ENCODE measurements at regions of chr3 and their contacts with region 1.

Region 1: GRCh38 chr3:146747928-146748327 is 142.8 kb upstream of the PLSCR5 start:
- DNase-seq: peak; percentile 35
- H3K4me3 ChIP-seq: no peak overlapping the region
- H3K27ac ChIP-seq: peak overlapping the region; percentile 20
- H3K4me1 ChIP-seq: peaks cover 28% of the 10 kb centered on the region
- H3K27me3 ChIP-seq: no peaks in the 10 kb centered on the region
- CTCF ChIP-seq: peak in 1 of 2 donors; percentile 6
- POLR2A ChIP-seq: no peak

Region 2: GRCh38 chr3:146968204-146968651 is 220.3 kb after region 1 on chr3:
- CTCF ChIA-PET with region 1: no interaction called
- POLR2A ChIA-PET with region 1: no interaction called
- dilution Hi-C with region 1: no loop called
- intact Hi-C with region 1: loop called (anchors 5 kb)
- DNase-seq: peak; percentile 46
- H3K4me3 ChIP-seq: no peak overlapping the region
- H3K27ac ChIP-seq: no peak overlapping the region
- H3K4me1 ChIP-seq: peaks cover 12% of the 10 kb centered on the region
- H3K27me3 ChIP-seq: no peaks in the 10 kb centered on the region
- CTCF ChIP-seq: no peak
- POLR2A ChIP-seq: no peak

Region 3: DNA sequence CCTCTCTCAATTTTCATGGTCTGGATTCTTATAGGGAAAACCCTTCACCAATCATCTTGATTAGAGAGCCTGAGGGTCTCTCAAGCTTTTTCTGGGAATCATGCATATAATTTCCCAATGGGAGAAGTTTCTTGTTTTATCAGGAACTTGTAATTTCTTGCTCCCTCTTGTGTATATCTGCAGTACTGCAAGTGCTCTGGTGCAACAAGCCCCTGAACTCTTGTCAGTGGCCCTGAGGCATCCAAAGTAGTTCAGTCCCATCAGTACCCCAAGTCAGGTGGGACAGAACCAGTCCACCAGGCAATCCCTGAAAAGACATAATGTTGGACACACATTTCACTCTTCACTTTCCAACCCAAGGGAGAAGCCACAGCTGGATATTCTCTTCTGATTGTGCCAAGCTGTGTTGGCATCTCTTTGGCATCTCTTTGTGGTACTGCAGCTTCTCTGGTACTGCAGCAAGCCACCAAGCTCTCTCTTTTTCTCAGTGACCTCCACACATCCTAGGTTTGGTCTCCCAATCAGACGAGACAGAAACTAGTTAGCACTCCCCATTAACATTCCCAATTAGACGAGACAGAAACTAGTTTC is 444.0 kb after region 1 on chr3:
- CTCF ChIA-PET with region 1: interaction called, 37 read pairs
- POLR2A ChIA-PET with region 1: no interaction called
- dilution Hi-C with region 1: no loop called
- intact Hi-C with region 1: loop called (anchors 1 kb)
- DNase-seq: peak; percentile 82
- H3K4me3 ChIP-seq: no peak overlapping the region
- H3K27ac ChIP-seq: no peak overlapping the region
- H3K4me1 ChIP-seq: no peaks in the 10 kb centered on the region
- H3K27me3 ChIP-seq: no peaks in the 10 kb centered on the region
- CTCF ChIP-seq: peak; percentile 67 to 71
- POLR2A ChIP-seq: no peak

Region 4: GRCh38 chr3:147336543-147337278 is 588.8 kb after region 1 on chr3:
- CTCF ChIA-PET with region 1: interaction called, 3 read pairs
- POLR2A ChIA-PET with region 1: no interaction called
- dilution Hi-C with region 1: no loop called
- intact Hi-C with region 1: loop called (anchors 1 kb)
- DNase-seq: peak; percentile 91
- H3K4me3 ChIP-seq: peak overlapping the region in 1 of 3 experiments; percentile 47
- H3K27ac ChIP-seq: peak overlapping the region; percentile 93
- H3K4me1 ChIP-seq: peaks cover 43% of the 10 kb centered on the region
- H3K27me3 ChIP-seq: peaks cover 0 to 1% of the 10 kb centered on the region in 2 experiments
- CTCF ChIP-seq: no peak
- POLR2A ChIP-seq: peak; percentile 59

Region 5: DNA sequence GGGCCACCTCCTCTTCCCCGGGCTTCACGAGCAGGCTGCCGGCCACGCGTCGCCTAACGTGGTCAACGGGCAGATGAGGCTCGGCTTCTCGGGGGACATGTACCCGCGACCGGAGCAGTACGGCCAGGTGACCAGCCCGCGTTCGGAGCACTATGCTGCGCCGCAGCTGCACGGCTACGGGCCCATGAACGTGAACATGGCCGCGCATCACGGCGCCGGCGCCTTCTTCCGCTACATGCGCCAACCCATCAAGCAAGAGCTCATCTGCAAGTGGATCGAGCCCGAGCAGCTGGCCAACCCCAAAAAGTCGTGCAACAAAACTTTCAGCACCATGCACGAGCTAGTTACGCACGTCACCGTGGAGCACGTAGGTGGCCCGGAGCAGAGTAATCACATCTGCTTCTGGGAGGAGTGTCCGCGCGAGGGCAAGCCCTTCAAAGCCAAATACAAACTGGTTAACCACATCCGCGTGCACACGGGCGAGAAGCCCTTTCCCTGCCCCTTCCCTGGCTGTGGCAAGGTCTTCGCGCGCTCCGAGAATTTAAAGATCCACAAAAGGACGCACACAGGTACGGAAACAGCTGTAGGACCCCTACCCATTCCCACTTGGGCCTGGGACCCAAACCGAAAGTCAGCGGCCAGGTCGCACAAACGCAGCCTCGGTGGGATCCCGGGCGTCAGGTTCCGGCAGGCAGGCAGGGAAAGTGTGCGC is 662.8 kb after region 1 on chr3:
- CTCF ChIA-PET with region 1: interaction called, 6 read pairs
- POLR2A ChIA-PET with region 1: no interaction called
- dilution Hi-C with region 1: no loop called
- intact Hi-C with region 1: loop called (anchors 5 kb)
- DNase-seq: no peak
- H3K4me3 ChIP-seq: peak overlapping the region in 1 of 3 experiments; percentile 18
- H3K27ac ChIP-seq: no peak overlapping the region
- H3K4me1 ChIP-seq: peaks cover 6% of the 10 kb centered on the region
- H3K27me3 ChIP-seq: peaks cover 93 to 98% of the 10 kb centered on the region in 2 experiments
- CTCF ChIP-seq: no peak
- POLR2A ChIP-seq: no peak

Measured in endothelial cell of umbilical vein (primary cell).